ENCODE measurements at regions of chr22 and their contacts with region 1.

Region 1: DNA sequence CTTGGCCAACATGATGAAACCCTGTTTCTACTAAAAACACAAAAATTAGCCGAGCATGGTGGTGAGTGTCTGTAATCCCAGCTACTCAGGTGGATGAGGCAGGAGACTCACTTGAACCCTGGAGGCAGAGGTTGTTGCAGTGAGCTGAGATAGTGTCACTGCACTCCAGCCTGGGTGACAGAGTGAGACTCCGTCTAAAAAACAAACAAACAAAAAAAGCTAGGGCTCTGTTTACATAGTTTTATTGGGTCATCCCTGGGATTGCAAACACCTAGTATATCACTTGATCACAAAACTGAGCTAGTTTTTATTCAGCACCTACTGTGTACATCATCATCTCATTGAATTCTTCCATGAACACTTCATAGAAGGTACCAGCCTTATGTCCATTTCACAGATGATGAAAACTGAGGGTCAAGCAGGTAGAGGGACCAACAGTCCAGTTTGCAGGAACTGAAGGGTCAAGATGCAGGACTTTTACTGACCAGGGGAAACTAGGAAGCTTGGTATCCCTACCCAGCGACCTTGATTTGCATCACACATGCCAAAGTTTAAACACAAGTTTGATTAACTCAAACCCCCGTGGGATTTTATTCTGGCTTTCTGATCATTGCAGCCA is 9.2 kb upstream of the MRTFA start:
- DNase-seq: no peak
- H3K4me3 Mint-ChIP-seq: no peak overlapping the region
- H3K27ac Mint-ChIP-seq: no peak overlapping the region
- H3K4me1 Mint-ChIP-seq: peaks cover 4% of the 10 kb centered on the region
- H3K27me3 Mint-ChIP-seq: no peaks in the 10 kb centered on the region

Region 2: GRCh38 chr22:40519284-40519947 is 126.3 kb before region 1 on chr22:
- CTCF ChIA-PET with region 1: interaction called, 218 read pairs
- POLR2A ChIA-PET with region 1: no interaction called
- intact Hi-C with region 1: no loop called
- DNase-seq: no peak
- H3K4me3 Mint-ChIP-seq: peak overlapping the region; percentile 60
- H3K27ac Mint-ChIP-seq: peak overlapping the region; percentile 91
- H3K4me1 Mint-ChIP-seq: peaks cover 32% of the 10 kb centered on the region
- H3K27me3 Mint-ChIP-seq: no peaks in the 10 kb centered on the region

Region 3: DNA sequence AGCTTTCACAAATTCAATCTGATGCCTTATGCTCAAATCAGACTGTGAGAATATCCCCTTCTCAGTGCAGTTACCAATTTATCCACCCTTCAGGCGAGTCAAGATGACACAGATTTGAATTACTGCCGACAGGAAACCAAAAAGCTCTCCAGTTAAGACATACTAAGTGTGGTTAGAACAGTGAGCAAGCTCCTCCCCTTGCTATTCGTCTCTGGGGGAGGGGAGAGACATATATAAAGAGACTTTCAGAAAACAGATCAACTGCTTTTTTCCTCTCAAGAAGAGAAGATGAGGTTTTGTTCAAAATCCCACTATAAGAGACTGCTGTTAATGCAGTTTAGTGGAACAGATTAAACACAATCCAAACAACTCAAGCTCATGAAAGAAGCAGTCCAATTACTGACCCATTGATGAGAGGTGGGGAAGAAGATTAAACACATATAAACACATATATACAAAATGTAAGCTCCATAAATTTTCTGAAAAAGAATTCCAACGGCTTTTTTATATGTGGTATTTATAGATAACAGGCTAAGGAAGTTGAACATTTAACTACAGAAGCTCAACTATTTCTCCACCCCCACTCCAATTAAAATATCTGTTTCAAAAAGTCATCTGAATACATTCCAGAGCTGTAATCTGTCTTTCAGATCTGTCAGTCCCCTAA is 111.8 kb before region 1 on chr22:
- CTCF ChIA-PET with region 1: interaction called, 218 read pairs
- POLR2A ChIA-PET with region 1: interaction called, 4 read pairs
- intact Hi-C with region 1: loop called (anchors 2 kb)
- DNase-seq: peak; percentile 65
- H3K4me3 Mint-ChIP-seq: peak overlapping the region; percentile 78
- H3K27ac Mint-ChIP-seq: peak overlapping the region; percentile 83
- H3K4me1 Mint-ChIP-seq: peaks cover 64% of the 10 kb centered on the region
- H3K27me3 Mint-ChIP-seq: no peaks in the 10 kb centered on the region

Region 4: DNA sequence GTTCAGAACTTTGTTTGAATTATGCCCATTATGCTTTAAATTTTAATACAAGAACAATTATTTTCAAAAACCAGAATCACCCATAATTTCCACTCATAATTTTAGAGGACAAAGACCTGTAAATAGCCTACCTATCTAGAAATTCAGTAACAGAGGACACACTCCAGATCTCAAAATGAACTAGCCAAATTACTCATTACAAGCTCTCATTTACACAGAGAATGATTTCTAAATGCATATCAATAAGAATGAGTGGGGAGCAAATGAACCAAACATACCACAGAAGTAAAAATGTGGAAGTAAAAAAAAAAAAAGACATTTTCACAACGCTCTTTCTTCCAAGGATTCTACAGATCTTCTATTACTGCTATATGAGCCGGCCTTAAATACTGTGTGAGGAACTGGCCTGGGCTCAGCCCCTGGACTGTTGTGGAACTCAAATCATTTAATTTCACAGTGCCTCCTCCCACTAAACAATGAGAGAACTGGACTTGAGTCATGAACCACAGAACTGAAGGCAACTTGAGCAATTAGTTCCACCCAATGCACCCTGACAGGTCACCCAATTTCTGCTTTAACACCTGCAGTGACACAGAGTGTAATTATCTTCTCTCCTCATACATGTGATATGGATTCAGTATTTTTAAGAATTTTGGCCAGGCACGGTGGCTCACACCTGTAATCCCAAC is 17.2 kb before region 1 on chr22:
- CTCF ChIA-PET with region 1: interaction called, 25 read pairs
- POLR2A ChIA-PET with region 1: no interaction called
- intact Hi-C with region 1: no loop called
- DNase-seq: peak; percentile 46
- H3K4me3 Mint-ChIP-seq: no peak overlapping the region
- H3K27ac Mint-ChIP-seq: peak overlapping the region; percentile 59
- H3K4me1 Mint-ChIP-seq: peaks cover 55% of the 10 kb centered on the region
- H3K27me3 Mint-ChIP-seq: no peaks in the 10 kb centered on the region